Heart right ventricle (tissue), 16 donors: ENCODE measurements at regions of chr15 and their contacts with region 1.

Region 1: DNA sequence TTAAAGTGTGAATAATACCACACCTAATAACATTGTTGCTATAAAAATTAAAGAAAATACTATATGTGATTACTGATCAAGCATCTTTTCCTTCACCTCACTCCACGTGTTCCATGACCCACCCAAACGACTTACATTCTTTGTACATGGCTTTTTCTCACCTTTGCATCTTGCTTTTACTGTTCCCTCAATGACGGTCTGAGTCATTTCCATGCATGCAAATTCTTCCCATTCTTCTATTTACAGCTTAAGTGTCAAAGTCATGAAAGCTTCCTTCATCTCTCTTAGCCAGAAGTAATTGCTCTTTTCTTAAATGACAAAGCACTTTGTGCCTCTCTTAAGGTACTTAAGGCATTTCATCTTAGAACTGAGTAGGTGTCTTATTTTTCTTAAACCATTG is 64.0 kb downstream of the GREM1 start:
- DNase-seq: no peak
- ATAC-seq: no peak
- H3K4me3 ChIP-seq: no peak overlapping the region
- H3K27ac ChIP-seq: no peak overlapping the region
- H3K4me1 ChIP-seq: no peaks in the 10 kb centered on the region
- H3K27me3 ChIP-seq: no peaks in the 10 kb centered on the region
- CTCF ChIP-seq: no peak

Region 2: GRCh38 chr15:32733281-32733680 is 48.5 kb before region 1 on chr15:
- intact Hi-C with region 1: no loop called
- DNase-seq: no peak
- ATAC-seq: no peak
- H3K4me3 ChIP-seq: no peak overlapping the region
- H3K27ac ChIP-seq: no peak overlapping the region
- H3K4me1 ChIP-seq: no peaks in the 10 kb centered on the region
- H3K27me3 ChIP-seq: peaks cover 0 to 33% (median 12%) of the 10 kb centered on the region in 7 donors
- CTCF ChIP-seq: no peak

Region 3: DNA sequence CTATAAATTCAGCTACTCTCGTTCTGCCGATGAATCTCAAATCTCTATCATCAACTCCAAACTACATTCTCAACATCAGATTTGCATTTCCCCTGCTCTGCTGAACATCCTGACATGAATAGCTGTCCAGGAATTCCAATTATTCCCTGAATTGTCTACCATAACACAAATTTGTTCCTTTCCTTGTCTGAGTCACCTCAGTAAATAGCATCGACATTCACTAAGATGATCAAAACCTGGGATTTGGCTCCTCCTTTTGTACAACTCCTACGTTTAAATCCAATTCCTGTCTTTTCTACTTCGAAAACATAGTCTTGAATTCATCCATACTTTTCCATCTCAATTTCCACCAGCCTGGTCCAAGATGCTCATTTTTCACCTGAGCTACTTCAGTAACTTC is 43.0 kb after region 1 on chr15:
- intact Hi-C with region 1: loop called in 1 of 10 experiments (anchors 5 kb)
- DNase-seq: no peak
- ATAC-seq: no peak
- H3K4me3 ChIP-seq: no peak overlapping the region
- H3K27ac ChIP-seq: no peak overlapping the region
- H3K4me1 ChIP-seq: no peaks in the 10 kb centered on the region
- H3K27me3 ChIP-seq: peaks cover 0 to 6% (median 0%) of the 10 kb centered on the region in 7 donors
- CTCF ChIP-seq: no peak

Region 4: GRCh38 chr15:32838338-32838737 is 56.6 kb after region 1 on chr15:
- intact Hi-C with region 1: no loop called
- DNase-seq: no peak
- ATAC-seq: no peak
- H3K4me3 ChIP-seq: no peak overlapping the region
- H3K27ac ChIP-seq: no peak overlapping the region
- H3K4me1 ChIP-seq: no peaks in the 10 kb centered on the region
- H3K27me3 ChIP-seq: peaks cover 0 to 16% (median 0%) of the 10 kb centered on the region in 7 donors
- CTCF ChIP-seq: no peak